H1 (cell line): ENCODE measurements at regions of chr16 and their contacts with region 1.

Region 1: DNA sequence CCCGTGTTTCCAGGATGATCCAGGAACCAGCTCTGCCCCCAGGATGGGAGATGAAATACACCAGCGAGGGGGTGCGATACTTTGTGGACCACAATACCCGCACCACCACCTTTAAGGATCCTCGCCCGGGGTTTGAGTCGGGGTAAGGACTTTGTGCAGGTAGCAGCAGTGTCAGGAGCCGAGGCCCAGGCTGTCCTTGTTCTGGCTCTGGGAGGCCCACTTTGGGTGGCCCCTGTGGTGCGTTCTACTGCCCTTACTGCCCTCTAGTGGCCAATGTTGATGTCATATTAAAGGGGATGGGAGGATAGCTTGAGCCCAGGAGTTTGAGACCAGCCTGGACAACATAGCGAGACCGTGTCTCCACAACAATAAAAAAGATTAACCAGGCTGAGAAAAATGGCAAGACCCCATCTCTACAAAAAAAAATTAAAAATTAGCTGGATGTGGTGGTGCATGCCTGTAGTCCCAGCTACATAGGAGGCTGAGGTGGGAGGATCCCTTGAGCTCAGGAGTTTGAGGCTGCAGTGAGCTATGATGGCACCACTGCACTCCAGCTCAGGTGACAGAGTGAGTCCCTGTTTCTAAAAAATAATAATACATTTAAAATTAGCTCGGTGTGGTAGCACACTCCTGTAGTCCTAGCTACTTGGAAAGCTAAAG is 20.9 kb upstream of the CLEC18A start:
- DNase-seq: peak in 1 of 2 experiments; percentile 74
- H3K4me3 ChIP-seq: no peak overlapping the region
- H3K27ac ChIP-seq: no peak overlapping the region
- H3K4me1 ChIP-seq: peaks cover 0 to 3% (median 2%) of the 10 kb centered on the region in 4 experiments; a peak in 3 of 7 replicates
- H3K27me3 ChIP-seq: no peaks in the 10 kb centered on the region
- CTCF ChIP-seq: peak; percentile 66 to 78 (median 76)
- EP300 ChIP-seq: no peak
- POLR2A ChIP-seq: no peak
- RAD21 ChIP-seq: peak; percentile 70 to 81

Region 2: GRCh38 chr16:69589434-69590269 is 340.6 kb before region 1 on chr16:
- CTCF ChIA-PET with region 1: no interaction called
- POLR2A ChIA-PET with region 1: no interaction called
- DNase-seq: no peak
- H3K4me3 ChIP-seq: no peak overlapping the region
- H3K27ac ChIP-seq: no peak overlapping the region
- H3K4me1 ChIP-seq: no peaks in the 10 kb centered on the region
- H3K27me3 ChIP-seq: no peaks in the 10 kb centered on the region
- CTCF ChIP-seq: no peak
- EP300 ChIP-seq: no peak
- POLR2A ChIP-seq: no peak
- RAD21 ChIP-seq: no peak

Region 3: DNA sequence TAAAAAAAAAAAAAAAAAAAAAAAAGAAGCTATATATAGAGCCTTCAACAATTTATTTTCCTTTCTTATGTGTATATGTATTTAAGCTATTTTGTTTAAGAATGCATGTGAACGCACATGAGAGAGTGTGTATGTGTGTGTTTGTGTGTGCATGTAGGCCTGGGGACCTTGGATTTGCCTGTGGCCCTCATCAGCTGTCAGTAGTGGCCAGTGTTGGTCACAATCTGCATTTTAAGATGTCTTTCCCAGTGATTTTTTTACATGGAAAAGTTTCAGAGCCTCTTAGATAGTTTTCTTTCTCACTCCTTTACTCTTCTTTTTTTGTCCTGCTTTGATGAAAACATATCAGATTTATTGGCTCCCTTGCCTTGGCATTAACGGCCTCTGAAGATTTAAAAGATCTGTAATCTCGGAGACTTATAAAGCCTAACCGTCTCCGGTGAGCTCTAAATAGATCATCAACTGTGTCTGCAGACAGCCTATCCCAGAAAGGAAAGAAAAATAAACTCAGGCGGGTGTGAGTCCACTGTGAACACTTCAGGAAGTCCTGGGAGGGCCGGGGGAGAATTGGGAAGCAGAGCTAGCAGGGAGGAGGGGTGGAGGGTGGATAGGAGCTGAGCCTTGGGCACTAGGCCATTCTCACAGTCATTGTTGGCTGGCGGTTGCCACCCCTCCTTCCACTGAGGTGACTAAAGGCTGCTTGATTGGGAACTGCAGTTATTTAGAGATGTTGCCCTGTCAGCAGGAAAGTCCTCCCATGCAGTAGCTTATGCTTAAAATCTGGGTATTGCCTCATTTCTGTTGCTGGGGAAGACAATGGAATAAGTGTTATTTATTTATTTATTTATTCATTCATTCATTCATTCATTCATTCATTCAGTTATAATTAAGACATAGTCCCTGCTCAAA is 81.4 kb before region 1 on chr16:
- CTCF ChIA-PET with region 1: interaction called, 23 read pairs
- POLR2A ChIA-PET with region 1: no interaction called
- DNase-seq: no peak
- H3K4me3 ChIP-seq: no peak overlapping the region
- H3K27ac ChIP-seq: no peak overlapping the region
- H3K4me1 ChIP-seq: no peaks in the 10 kb centered on the region; a peak in 1 of 7 replicates
- H3K27me3 ChIP-seq: no peaks in the 10 kb centered on the region
- CTCF ChIP-seq: no peak
- EP300 ChIP-seq: no peak
- POLR2A ChIP-seq: no peak
- RAD21 ChIP-seq: no peak

Region 4: GRCh38 chr16:69867784-69868551 is 62.3 kb before region 1 on chr16:
- CTCF ChIA-PET with region 1: interaction called, 31 read pairs
- POLR2A ChIA-PET with region 1: no interaction called
- DNase-seq: no peak
- H3K4me3 ChIP-seq: no peak overlapping the region
- H3K27ac ChIP-seq: no peak overlapping the region
- H3K4me1 ChIP-seq: no peaks in the 10 kb centered on the region
- H3K27me3 ChIP-seq: no peaks in the 10 kb centered on the region
- CTCF ChIP-seq: no peak
- EP300 ChIP-seq: no peak
- POLR2A ChIP-seq: no peak
- RAD21 ChIP-seq: no peak

Region 5: GRCh38 chr16:69906838-69907401 is 23.3 kb before region 1 on chr16:
- CTCF ChIA-PET with region 1: interaction called, 74 read pairs
- POLR2A ChIA-PET with region 1: interaction called, 3 read pairs
- DNase-seq: no peak
- H3K4me3 ChIP-seq: no peak overlapping the region
- H3K27ac ChIP-seq: no peak overlapping the region
- H3K4me1 ChIP-seq: peaks cover 0 to 9% (median 0%) of the 10 kb centered on the region in 4 experiments; a peak in 2 of 7 replicates
- H3K27me3 ChIP-seq: no peaks in the 10 kb centered on the region
- CTCF ChIP-seq: no peak
- EP300 ChIP-seq: no peak
- POLR2A ChIP-seq: no peak
- RAD21 ChIP-seq: no peak

Region 6: DNA sequence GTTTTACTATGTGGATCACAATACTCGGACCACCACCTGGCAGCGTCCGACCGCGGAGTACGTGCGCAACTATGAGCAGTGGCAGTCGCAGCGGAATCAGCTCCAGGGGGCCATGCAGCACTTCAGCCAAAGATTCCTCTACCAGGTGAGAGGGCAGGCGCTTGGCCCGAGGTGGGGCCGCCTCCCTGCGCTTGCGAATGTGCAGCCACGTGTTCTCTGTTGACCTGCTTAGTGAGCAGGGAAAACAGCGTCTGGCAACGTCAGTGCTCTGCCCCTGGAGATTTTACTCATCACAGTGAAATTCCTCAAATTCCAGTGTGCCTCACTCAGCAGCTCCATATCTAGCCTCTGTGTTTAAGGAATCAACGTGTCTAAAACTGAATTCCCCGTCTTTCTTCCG is 12.5 kb before region 1 on chr16:
- CTCF ChIA-PET with region 1: interaction called, 74 read pairs
- POLR2A ChIA-PET with region 1: interaction called, 10 read pairs
- DNase-seq: peak; percentile 46 to 71
- H3K4me3 ChIP-seq: no peak overlapping the region
- H3K27ac ChIP-seq: no peak overlapping the region
- H3K4me1 ChIP-seq: peaks cover 3 to 10% (median 5%) of the 10 kb centered on the region in 4 experiments; a peak in 4 of 7 replicates
- H3K27me3 ChIP-seq: no peaks in the 10 kb centered on the region
- CTCF ChIP-seq: no peak
- EP300 ChIP-seq: no peak
- POLR2A ChIP-seq: no peak
- RAD21 ChIP-seq: no peak